ENCODE measurements at regions of chr19 and their contacts with region 1.

Region 1: GRCh38 chr19:4791170-4792018 is at the start of gene FEM1A:
- DNase-seq: peak; percentile 94 to 98
- H3K4me3 ChIP-seq: peak within 1 kb of the TSS; percentile 73
- H3K27ac ChIP-seq: peak within 1 kb of the TSS; percentile 58
- H3K4me1 ChIP-seq: 0 out of 2 replicates have a peak, but pooled peaks cover 8% of the 10 kb centered on the region
- H3K27me3 ChIP-seq: no peaks in the 10 kb centered on the region
- CTCF ChIP-seq: peak; percentile 88
- total RNA-seq, gene FEM1A: 6.5 and 7.0 TPM in 2 replicates

Region 2: DNA sequence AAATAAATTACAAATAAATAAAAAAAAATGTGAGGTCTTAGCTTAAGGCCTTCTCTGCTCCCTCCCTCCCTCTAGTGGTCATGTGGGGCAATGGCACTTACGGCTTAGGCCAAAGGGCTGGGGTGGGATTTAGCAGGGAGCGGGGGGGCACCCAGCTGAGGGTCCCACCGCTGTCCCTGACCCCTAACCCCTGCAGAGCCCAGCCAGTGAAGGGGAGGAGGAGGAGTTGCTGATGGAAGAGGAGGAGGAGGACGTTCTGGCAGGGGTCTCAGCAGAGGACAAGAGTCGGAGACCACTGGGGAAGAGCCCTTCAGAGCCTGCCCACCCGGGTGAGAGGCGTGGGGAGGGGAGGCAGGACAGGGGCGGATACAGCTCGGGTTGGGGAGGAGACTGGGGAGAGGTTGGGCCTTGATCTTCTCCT is 438.7 kb before region 1 on chr19:
- CTCF ChIA-PET with region 1: interaction called, 21 read pairs
- POLR2A ChIA-PET with region 1: no interaction called
- intact Hi-C with region 1: no loop called
- DNase-seq: peak in 1 of 2 experiments; percentile 49
- H3K4me3 ChIP-seq: no peak overlapping the region
- H3K27ac ChIP-seq: no peak overlapping the region
- H3K4me1 ChIP-seq: no peaks in the 10 kb centered on the region
- H3K27me3 ChIP-seq: no peaks in the 10 kb centered on the region
- CTCF ChIP-seq: peak; percentile 87

Region 3: DNA sequence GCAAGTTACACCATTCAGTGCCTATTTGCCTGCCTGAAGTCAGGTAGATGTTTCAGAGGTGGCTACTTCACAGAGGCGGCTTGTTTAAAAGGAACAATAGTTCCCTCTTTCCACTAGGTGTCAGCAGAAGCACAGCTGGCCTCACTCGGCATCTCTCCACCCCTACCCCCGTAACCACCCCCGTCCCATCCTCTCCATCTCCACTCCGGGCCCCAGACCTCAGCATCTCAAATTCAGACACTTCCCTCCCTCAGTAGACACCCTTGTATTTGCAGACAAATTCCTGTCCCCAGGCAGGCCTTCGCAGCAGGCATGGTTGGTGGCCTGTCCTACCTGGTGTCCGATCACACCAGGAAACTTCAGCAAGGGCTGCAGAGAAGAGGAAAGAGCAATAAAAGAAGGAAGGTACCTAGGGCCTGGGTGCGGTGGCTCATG is 58.7 kb before region 1 on chr19:
- CTCF ChIA-PET with region 1: interaction called, 18 read pairs
- POLR2A ChIA-PET with region 1: no interaction called
- intact Hi-C with region 1: loop called (anchors 1 kb)
- DNase-seq: peak in 1 of 2 experiments; percentile 35
- H3K4me3 ChIP-seq: no peak overlapping the region
- H3K27ac ChIP-seq: no peak overlapping the region
- H3K4me1 ChIP-seq: no peaks in the 10 kb centered on the region
- H3K27me3 ChIP-seq: peaks cover 3% of the 10 kb centered on the region; the same call in 1 of the 2 replicates
- CTCF ChIP-seq: peak; percentile 65

Region 4: GRCh38 chr19:5031231-5032100 is 240.1 kb after region 1 on chr19:
- CTCF ChIA-PET with region 1: interaction called, 16 read pairs
- POLR2A ChIA-PET with region 1: no interaction called
- intact Hi-C with region 1: no loop called
- DNase-seq: peak; percentile 40 to 76
- H3K4me3 ChIP-seq: no peak overlapping the region
- H3K27ac ChIP-seq: no peak overlapping the region
- H3K4me1 ChIP-seq: no peaks in the 10 kb centered on the region
- H3K27me3 ChIP-seq: no peaks in the 10 kb centered on the region
- CTCF ChIP-seq: peak; percentile 89

Measured in PC-9 (cell line).